Activated T-helper 2 cell treated with anti-CD3 and anti-CD28 coated beads, Interferon-gamma antibody, Interleukin-2, Interleukin-4, amounts not matched to agents 10 μg/mL and 5 μg/mL and 100 μg/mL, durations not matched to agents 14 hours and 24 hours and 36 hours (primary cell): ENCODE measurements at regions of chr17 and their contacts with region 1.

Region 1: DNA sequence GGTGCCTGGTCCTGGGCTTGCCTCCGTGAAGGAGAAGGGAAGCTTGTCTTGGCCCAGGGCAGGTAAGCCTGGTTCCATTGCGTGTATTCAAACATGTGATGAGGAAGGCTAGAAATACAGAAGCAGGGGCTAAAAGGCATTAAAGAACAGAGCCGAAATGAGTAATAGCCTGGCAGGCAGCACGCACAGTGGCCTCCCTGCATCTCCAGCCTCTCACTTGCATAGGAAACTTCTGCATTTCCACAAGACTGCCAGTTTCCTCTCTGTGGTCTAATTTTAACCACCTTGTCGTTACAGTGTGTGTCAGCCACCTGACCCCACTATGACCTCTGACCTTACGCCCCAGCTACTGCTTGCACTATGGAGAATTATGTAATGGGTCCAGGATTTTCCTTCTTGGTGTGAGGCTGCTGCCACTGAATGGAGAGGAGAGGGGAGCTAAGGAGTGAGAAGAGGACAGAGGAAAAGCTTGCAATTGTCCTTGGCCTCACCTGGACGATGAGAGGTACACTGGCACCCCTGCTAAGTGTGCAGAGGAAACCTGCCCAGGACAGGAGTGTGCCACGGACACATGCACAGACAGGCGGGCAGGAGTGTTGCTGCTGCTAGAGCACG is 32.8 kb downstream of the HIC1 start:
- DNase-seq: peak; percentile 68
- H3K4me3 Mint-ChIP-seq: peak overlapping the region; percentile 61
- H3K27ac Mint-ChIP-seq: peak overlapping the region; percentile 72
- H3K4me1 Mint-ChIP-seq: peaks cover 93% of the 10 kb centered on the region
- H3K27me3 Mint-ChIP-seq: no peaks in the 10 kb centered on the region

Region 2: GRCh38 chr17:1908699-1909309 is 178.9 kb before region 1 on chr17:
- intact Hi-C with region 1: no loop called
- DNase-seq: peak; percentile 18
- H3K4me3 Mint-ChIP-seq: no peak overlapping the region
- H3K27ac Mint-ChIP-seq: no peak overlapping the region
- H3K4me1 Mint-ChIP-seq: peaks cover 2% of the 10 kb centered on the region
- H3K27me3 Mint-ChIP-seq: peaks cover 58% of the 10 kb centered on the region

Region 3: DNA sequence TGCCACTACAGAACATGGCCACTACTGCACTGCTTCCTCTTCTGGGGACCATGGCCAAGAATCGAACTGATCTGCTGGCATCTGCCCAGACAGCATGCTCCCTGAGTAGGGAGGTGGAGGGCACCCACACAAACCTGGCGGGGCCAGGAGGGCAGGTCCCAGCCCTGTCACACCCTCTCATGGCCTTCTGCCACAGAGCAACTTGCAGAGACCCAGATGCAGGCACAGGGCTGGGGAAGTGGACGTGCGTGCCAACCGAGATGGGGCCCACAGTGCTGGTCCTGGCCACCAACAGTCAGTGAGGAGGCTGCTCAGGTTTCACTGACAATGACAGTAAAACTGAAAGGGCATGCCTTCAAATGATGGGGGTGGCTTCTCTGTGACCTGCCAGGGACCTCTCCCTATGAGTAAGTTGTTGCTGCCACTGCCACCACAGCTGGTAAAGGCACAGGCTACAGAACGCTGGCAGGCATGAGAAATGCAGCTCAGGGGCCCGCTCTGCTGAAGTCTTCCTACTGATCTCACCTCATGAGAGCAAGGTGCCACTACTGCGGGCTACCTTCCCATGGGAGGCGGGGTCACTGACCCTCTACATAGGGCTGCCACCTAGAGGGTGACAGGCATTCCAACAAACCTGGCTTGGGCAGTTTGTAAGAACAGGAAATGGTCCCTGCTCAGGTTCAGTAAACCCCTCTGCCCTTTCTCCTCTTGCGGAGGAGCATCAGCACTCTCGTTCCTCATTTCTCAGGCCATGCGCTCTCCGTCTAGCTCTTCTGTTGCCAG is 17.3 kb before region 1 on chr17:
- intact Hi-C with region 1: loop called (anchors 1 kb)
- DNase-seq: peak; percentile 80
- H3K4me3 Mint-ChIP-seq: peak overlapping the region; percentile 70
- H3K27ac Mint-ChIP-seq: peak overlapping the region; percentile 97
- H3K4me1 Mint-ChIP-seq: peaks cover 69% of the 10 kb centered on the region
- H3K27me3 Mint-ChIP-seq: no peaks in the 10 kb centered on the region

Region 4: DNA sequence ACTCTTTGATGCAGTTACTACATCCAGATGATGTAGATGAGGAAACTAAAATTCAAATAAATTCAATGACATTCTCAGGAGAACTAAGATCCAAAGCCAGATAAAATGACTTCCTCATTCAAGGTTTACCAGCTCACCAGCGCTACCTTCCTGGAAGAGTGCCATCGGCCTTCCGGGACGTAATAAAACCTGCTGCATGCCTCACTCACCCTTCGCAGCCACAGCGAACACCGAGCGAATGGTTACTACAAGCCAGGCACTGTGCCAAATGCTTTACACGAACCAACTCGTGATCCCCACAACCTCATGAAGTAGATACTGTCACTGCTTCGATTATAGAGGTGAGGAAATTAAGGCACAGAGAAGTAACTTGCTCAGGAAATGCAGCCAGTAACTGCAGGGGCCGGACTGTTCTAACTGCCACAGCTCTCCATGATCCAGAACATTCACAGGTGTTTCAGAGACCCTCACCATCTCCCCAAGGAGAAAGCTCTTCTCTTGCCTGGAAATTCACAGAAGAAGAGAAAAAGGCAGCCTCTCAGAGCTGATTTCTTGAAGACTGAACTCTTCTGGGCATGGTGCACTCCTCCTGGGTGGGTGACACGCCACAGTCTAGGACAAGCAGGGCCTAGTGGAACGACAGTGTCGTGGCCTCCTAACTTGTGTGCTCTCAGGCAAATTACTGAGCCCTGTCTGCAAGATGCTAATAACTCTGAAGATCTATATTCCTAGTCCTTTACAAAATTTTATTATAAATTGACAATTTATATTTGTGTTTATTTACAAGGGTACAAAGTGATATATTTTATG is 13.9 kb after region 1 on chr17:
- intact Hi-C with region 1: loop called (anchors 2 kb)
- DNase-seq: no peak
- H3K4me3 Mint-ChIP-seq: no peak overlapping the region
- H3K27ac Mint-ChIP-seq: peak overlapping the region; percentile 42
- H3K4me1 Mint-ChIP-seq: peaks cover 49% of the 10 kb centered on the region
- H3K27me3 Mint-ChIP-seq: no peaks in the 10 kb centered on the region

Region 5: GRCh38 chr17:2137342-2138098 is 49.8 kb after region 1 on chr17:
- intact Hi-C with region 1: loop called (anchors 10 kb)
- DNase-seq: no peak
- H3K4me3 Mint-ChIP-seq: no peak overlapping the region
- H3K27ac Mint-ChIP-seq: peak overlapping the region; percentile 67
- H3K4me1 Mint-ChIP-seq: peaks cover 20% of the 10 kb centered on the region
- H3K27me3 Mint-ChIP-seq: no peaks in the 10 kb centered on the region

Region 6: GRCh38 chr17:2192367-2193057 is 104.8 kb after region 1 on chr17:
- intact Hi-C with region 1: loop called (anchors 2 kb)
- DNase-seq: no peak
- H3K4me3 Mint-ChIP-seq: no peak overlapping the region
- H3K27ac Mint-ChIP-seq: peak overlapping the region; percentile 82
- H3K4me1 Mint-ChIP-seq: peaks cover 62% of the 10 kb centered on the region
- H3K27me3 Mint-ChIP-seq: no peaks in the 10 kb centered on the region

Region 7: DNA sequence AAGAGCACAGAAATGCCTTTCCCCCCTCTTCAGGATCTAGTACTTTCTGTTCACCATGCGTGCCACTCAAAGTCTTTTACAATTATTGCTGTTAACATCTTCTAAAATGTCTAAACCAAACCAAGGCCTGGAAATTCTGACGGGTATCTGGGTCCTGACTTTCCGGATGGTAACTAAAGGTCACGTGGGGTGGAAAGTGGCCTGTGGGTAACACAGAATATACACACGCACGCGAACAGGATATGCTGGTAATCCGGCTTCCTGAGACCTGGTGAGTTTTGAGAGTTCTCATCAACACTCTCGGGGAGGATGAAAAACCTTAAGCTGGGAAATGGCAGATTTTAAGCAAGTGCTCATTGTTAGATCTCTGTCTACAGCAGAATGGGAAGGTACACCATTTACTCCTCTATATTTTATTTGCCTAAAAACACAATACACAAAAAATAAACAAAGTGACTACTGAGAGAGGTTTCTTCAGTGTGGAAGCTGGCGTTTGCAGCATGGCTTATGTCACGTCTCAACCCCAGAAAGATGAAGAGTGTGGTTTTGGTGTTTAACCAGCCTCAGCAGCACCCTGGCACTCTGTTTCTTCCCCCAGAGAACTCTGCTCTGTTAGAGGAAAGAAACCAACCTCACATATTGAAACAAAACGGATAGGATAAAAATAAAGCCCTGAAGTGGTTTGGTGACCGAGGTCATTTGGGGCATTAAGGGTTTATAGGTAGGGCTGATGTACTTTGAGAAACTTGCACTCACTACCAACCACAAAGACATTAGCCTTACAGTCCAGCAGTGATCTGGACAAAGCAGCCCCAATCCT is 178.6 kb after region 1 on chr17:
- intact Hi-C with region 1: loop called (anchors 1 kb)
- DNase-seq: peak; percentile 89
- H3K4me3 Mint-ChIP-seq: peak overlapping the region; percentile 83
- H3K27ac Mint-ChIP-seq: peak overlapping the region; percentile 100
- H3K4me1 Mint-ChIP-seq: peaks cover 77% of the 10 kb centered on the region
- H3K27me3 Mint-ChIP-seq: no peaks in the 10 kb centered on the region